Endothelial cell of umbilical vein (primary cell): ENCODE measurements at regions of chr6 and their contacts with region 1.

Region 1: GRCh38 chr6:16183187-16183664 is 54.3 kb downstream of the MYLIP start:
- DNase-seq: peak; percentile 65
- H3K4me3 ChIP-seq: no peak overlapping the region
- H3K27ac ChIP-seq: no peak overlapping the region
- H3K4me1 ChIP-seq: no peaks in the 10 kb centered on the region
- H3K27me3 ChIP-seq: peaks cover 14% of the 10 kb centered on the region in 2 experiments
- CTCF ChIP-seq: peak; percentile 43 to 46
- POLR2A ChIP-seq: no peak

Region 2: GRCh38 chr6:15662326-15663129 is 520.7 kb before region 1 on chr6 and contains the start of gene DTNBP1:
- CTCF ChIA-PET with region 1: interaction called, 11 read pairs
- POLR2A ChIA-PET with region 1: no interaction called
- dilution Hi-C with region 1: no loop called
- intact Hi-C with region 1: no loop called
- DNase-seq: peak; percentile 79
- H3K4me3 ChIP-seq: peak within 1 kb of the TSS; percentile 62 to 78 (median 71)
- H3K27ac ChIP-seq: peak within 1 kb of the TSS; percentile 3
- H3K4me1 ChIP-seq: peaks cover 6% of the 10 kb centered on the region
- H3K27me3 ChIP-seq: peaks cover 3 to 7% of the 10 kb centered on the region in 2 experiments
- CTCF ChIP-seq: no peak
- POLR2A ChIP-seq: peak; percentile 42
- total RNA-seq, gene DTNBP1: 21.8 and 24.3 TPM in 2 replicates

Region 3: GRCh38 chr6:15698471-15698870 is 484.8 kb before region 1 on chr6:
- CTCF ChIA-PET with region 1: interaction called, 287 read pairs
- POLR2A ChIA-PET with region 1: no interaction called
- dilution Hi-C with region 1: no loop called
- intact Hi-C with region 1: no loop called
- DNase-seq: no peak
- H3K4me3 ChIP-seq: no peak overlapping the region
- H3K27ac ChIP-seq: no peak overlapping the region
- H3K4me1 ChIP-seq: no peaks in the 10 kb centered on the region
- H3K27me3 ChIP-seq: peaks cover 2 to 9% of the 10 kb centered on the region in 2 experiments
- CTCF ChIP-seq: no peak
- POLR2A ChIP-seq: no peak

Region 4: GRCh38 chr6:15893556-15894268 is 289.5 kb before region 1 on chr6:
- CTCF ChIA-PET with region 1: interaction called, 21 read pairs
- POLR2A ChIA-PET with region 1: no interaction called
- dilution Hi-C with region 1: no loop called
- intact Hi-C with region 1: loop called (anchors 5 kb)
- DNase-seq: peak; percentile 50
- H3K4me3 ChIP-seq: no peak overlapping the region
- H3K27ac ChIP-seq: no peak overlapping the region
- H3K4me1 ChIP-seq: peaks cover 18% of the 10 kb centered on the region
- H3K27me3 ChIP-seq: no peaks in the 10 kb centered on the region
- CTCF ChIP-seq: peak; percentile 34 to 42
- POLR2A ChIP-seq: no peak

Region 5: GRCh38 chr6:16136621-16137450 is 46.4 kb before region 1 on chr6:
- CTCF ChIA-PET with region 1: interaction called, 28 read pairs
- POLR2A ChIA-PET with region 1: no interaction called
- dilution Hi-C with region 1: no loop called
- intact Hi-C with region 1: no loop called
- DNase-seq: peak; percentile 64
- H3K4me3 ChIP-seq: no peak overlapping the region
- H3K27ac ChIP-seq: no peak overlapping the region
- H3K4me1 ChIP-seq: peaks cover 24% of the 10 kb centered on the region
- H3K27me3 ChIP-seq: no peaks in the 10 kb centered on the region
- CTCF ChIP-seq: no peak
- POLR2A ChIP-seq: no peak

Region 6: DNA sequence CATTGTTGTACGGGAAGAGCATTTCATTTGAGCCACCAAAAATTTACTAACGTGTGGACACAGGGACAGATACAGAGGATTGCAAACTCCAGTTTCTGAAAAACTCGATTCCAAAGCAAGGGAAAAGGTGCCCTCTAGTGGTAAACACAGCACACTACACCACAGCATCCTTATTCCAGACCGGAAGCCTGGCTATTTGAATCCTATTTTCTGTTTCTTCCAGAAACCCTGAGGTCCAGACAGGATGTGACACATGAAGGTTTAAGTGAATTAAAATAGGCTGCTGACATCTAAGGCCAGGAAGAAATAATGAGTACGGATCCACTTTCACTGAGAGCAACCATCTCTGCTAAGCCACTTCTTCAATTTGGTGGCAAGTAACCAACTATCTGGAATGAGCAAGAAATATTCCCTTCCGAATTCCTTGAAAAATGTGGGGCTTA is 23.4 kb after region 1 on chr6:
- CTCF ChIA-PET with region 1: interaction called, 90 read pairs
- POLR2A ChIA-PET with region 1: no interaction called
- dilution Hi-C with region 1: no loop called
- intact Hi-C with region 1: loop called (anchors 1 kb)
- DNase-seq: peak; percentile 90
- H3K4me3 ChIP-seq: no peak overlapping the region
- H3K27ac ChIP-seq: peak overlapping the region; percentile 75
- H3K4me1 ChIP-seq: peaks cover 14% of the 10 kb centered on the region
- H3K27me3 ChIP-seq: no peaks in the 10 kb centered on the region
- CTCF ChIP-seq: peak; percentile 84 to 94
- POLR2A ChIP-seq: no peak